AG04449 (cell line): ENCODE measurements at regions of chr20 and their contacts with region 1.

Region 1: DNA sequence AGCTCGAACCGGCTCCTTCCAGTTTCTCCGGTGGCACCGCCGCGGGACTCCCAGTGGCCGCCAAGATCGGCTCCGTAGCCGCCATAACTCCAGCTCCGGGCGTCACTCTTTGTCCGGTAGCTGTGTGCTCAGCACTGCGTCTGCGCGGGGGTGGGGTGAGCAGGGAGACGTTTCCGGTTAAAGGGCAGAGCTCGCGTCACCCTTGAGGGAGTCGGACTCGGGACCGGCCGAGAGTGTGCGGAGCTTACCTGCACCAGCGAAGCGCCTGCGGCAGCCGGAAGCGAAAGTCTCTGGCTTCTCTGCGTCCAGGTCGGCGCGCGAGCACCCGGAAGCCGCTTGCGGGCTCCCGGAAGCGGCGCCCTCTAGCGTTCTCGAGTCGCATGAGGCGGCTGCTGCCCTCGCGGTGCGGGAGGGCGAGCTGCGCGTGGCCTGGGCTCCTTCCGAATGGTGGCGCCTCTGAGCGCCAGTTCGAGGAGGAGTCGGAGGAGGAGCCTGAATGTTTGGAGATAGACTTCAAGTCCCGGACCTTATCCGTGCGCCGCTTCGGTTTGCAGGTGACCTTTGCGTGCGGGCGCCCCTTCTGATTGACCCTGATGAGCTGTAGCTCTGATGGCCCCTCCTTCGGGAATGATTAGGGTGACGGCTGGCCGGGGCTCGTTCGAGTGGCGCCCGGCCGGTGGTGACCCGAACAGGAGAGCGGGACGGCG is at the start of gene SCAND1:
- DNase-seq: peak; percentile 80
- H3K4me3 ChIP-seq: peak within 1 kb of the TSS; percentile 95
- CTCF ChIP-seq: peak; percentile 100

Region 2: GRCh38 chr20:35866418-35867197 is 87.7 kb before region 1 on chr20:
- CTCF ChIA-PET with region 1: no interaction called
- POLR2A ChIA-PET with region 1: no interaction called
- DNase-seq: peak; percentile 91
- H3K4me3 ChIP-seq: no peak overlapping the region
- CTCF ChIP-seq: no peak

Region 3: DNA sequence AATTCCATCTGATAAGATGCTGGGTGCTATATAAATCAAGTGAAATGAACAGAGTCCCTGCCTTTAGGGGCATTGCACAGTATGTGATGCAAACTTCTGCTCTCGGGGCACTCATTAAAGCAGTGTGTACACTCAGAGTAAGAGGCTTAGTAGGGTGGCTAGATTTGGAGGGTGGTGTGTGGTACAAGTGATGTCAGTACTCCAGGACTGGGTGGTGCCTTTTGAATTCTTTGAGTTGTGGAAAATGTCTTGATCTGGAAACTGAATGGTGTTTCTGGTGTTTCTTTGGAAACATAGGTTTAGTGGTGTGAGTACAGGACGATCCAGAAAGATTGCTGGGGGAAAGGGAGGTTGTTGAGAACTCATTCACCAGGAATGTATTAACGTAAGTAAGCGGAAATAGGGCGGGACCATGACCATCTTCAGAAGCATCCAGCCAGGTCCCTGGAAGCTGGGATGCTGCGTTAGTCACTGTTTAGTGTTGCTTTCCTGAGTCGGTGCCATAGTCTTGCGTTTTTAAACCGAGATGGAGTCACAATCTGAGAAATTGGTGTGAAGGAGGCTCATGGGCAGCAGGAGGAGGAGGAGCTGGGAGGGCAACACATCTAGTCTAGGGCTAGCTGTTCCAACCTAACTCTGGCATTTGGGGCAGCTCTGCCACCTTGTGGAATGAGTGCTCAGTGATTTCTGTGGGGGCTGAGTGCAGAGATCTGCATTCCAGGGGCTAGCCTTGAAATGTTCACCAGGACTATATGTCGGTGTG is 70.4 kb before region 1 on chr20:
- CTCF ChIA-PET with region 1: interaction called, 11 read pairs
- POLR2A ChIA-PET with region 1: interaction called, 9 read pairs
- DNase-seq: peak; percentile 99
- H3K4me3 ChIP-seq: peak overlapping the region; percentile 38
- CTCF ChIP-seq: peak; percentile 67

Region 4: GRCh38 chr20:35942243-35942642 is 12.1 kb before region 1 on chr20:
- CTCF ChIA-PET with region 1: interaction called, 67 read pairs
- POLR2A ChIA-PET with region 1: interaction called, 5 read pairs
- DNase-seq: no peak
- H3K4me3 ChIP-seq: no peak overlapping the region
- CTCF ChIP-seq: no peak

Region 5: GRCh38 chr20:36116807-36117441 is 162.6 kb after region 1 on chr20:
- CTCF ChIA-PET with region 1: interaction called, 11 read pairs
- POLR2A ChIA-PET with region 1: no interaction called
- DNase-seq: peak; percentile 63
- H3K4me3 ChIP-seq: no peak overlapping the region
- CTCF ChIP-seq: no peak

Region 6: GRCh38 chr20:36199345-36200257 is 245.2 kb after region 1 on chr20:
- CTCF ChIA-PET with region 1: interaction called, 16 read pairs
- POLR2A ChIA-PET with region 1: no interaction called
- DNase-seq: peak; percentile 9
- H3K4me3 ChIP-seq: no peak overlapping the region
- CTCF ChIP-seq: peak; percentile 87